ENCODE measurements at regions of chr2 and their contacts with region 1.

Region 1: DNA sequence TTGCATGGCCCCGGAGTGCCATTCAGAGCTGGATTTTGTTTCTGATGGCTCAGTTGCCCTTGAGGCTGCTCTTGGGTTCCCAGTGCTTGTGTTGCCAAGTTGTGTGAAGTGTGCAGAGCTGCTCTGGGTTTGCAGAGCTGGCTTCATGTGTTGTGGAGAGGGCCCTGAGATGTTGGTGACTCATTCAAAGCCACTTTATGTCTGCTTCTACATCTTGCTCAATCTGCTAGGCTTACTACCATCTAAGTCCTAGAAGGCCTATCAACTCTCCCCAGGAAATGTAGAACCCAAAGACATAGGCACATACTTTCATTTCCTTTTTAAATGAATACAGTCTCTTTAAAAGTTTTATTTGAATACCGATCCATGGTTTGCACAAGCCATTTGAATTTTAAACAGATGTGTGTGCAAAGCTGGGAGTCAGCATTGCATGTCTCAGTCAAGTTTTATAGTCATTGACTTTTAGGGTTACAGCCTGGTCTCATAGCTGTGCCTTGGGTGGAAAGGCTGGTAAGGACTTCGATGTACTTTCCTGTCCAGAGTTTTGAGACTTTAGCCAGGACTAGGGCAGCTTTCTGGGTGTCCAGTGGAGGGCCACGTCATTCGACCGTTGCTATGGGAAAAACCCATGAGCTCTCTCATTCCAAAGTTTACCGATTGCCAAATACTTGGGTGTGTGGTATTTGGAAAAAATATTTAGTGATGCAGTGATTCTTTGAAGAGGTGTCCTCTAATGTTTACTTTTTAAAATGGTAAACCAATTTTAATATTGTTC is 105.0 kb downstream of the LTBP1 start:
- DNase-seq: peak; percentile 66 to 95
- ATAC-seq: peak; percentile 97 to 99
- H3K4me3 ChIP-seq: 0 out of 3 replicates have a peak overlapping the region, but pooled peaks have one; percentile 8
- H3K27ac ChIP-seq: peak overlapping the region; percentile 84 to 85
- H3K4me1 ChIP-seq: peaks cover 32% of the 10 kb centered on the region
- CTCF ChIP-seq: no peak
- EP300 ChIP-seq: peak; percentile 80 to 84; a peak in 4 of 5 replicates
- POLR2A ChIP-seq: no peak
- RAD21 ChIP-seq: peak; percentile 16 to 55; a peak in 3 of 5 replicates

Region 2: DNA sequence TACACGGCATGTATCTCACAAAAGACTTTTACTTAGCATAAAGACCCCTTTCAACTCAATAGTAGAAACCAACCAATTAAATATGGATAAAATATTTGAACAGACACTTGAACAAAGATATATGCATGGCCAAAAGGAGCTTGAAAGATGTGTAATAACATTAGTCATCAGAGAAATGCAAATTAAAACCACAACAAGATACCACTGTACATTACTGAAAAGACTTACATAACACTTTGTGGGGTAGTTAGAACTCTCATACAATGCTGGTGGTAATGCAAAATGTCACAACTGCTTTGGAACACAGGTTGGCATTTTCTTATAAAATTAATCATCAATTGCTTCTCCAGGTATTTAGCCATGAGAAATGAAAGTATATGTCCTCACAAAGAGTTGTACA is 363.3 kb before region 1 on chr2:
- CTCF ChIA-PET with region 1: no interaction called
- POLR2A ChIA-PET with region 1: no interaction called
- DNase-seq: no peak
- ATAC-seq: no peak
- H3K4me3 ChIP-seq: no peak overlapping the region
- H3K27ac ChIP-seq: no peak overlapping the region
- H3K4me1 ChIP-seq: no peaks in the 10 kb centered on the region
- CTCF ChIP-seq: no peak
- EP300 ChIP-seq: no peak
- POLR2A ChIP-seq: no peak
- RAD21 ChIP-seq: no peak

Region 3: DNA sequence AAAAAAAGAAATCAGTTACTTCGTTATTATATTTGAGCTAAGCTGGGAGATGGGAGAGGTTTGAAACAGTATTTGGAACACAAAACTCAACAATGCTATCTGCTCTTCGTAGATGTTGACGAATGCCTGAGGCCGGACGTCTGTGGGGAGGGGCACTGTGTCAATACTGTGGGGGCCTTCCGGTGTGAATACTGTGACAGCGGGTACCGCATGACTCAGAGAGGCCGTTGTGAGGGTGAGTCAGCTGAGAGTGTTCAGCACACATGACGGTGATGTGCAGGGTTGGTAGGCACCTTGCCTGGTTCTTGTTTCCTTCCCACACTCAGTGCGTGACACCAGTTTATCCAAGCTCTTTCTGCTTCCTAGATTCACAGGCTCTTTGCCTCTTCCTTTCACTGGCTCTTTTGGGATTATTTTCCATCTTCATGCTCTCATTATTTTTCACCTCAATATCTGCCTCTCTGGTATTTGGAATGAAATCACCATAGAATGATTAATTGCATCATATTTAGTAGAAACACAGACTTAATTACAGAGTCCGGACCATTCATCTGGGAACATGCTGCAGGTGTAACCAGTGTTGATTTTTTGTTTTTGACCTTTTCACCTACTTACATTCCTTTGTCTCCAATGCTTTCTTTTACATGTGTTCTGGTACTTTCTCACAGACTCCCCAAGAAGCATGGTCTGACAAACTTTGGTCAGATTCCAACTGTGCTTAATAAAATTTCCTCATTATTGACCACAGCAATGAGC is 224.1 kb after region 1 on chr2:
- CTCF ChIA-PET with region 1: interaction called, 13 read pairs
- POLR2A ChIA-PET with region 1: no interaction called
- DNase-seq: peak; percentile 93 to 94
- ATAC-seq: peak; percentile 96 to 100
- H3K4me3 ChIP-seq: no peak overlapping the region
- H3K27ac ChIP-seq: peak overlapping the region; percentile 61 to 79
- H3K4me1 ChIP-seq: peaks cover 41% of the 10 kb centered on the region
- CTCF ChIP-seq: no peak
- EP300 ChIP-seq: peak; percentile 80 to 86; a peak in 3 of 5 replicates
- POLR2A ChIP-seq: no peak
- RAD21 ChIP-seq: peak; percentile 5 to 42; a peak in 3 of 5 replicates

Measured in A549 (cell line).